HCT116 (cell line): ENCODE measurements at regions of chr14 and their contacts with region 1.

Region 1: DNA sequence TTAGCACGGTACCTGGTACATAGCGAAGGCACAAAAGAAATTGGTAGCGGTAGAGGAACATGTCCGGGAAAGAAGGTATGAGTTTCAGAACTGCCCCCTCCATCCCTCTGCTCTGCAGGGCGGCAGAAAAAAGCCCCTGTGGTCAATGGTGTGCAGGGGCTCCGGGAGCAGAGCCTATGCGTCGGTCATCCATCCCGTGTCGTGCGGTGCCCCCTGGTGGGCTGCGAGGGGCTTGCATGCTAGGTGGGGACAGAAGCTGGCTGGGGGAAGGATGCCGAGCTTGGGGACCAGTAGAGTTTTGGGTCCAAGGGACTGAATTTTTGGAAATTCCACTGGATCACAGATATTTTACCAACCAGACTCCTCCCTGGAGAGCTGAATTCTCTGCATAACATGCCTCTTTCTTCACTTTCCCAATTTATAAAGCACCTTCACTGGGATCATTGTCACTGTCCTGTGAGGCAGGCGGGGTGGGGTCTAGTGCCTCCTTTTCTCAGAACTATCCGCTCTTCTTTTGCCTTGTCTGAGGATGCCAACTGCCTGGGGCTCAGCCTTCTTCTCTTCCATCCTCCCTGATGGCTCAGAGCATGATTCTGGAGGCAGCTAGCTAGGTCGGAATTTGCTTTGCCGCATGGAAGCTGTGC is 148.7 kb downstream of the SMOC1 start:
- DNase-seq: peak; percentile 10
- ATAC-seq: peak; percentile 91
- H3K4me3 ChIP-seq: no peak overlapping the region
- H3K27ac ChIP-seq: no peak overlapping the region
- H3K4me1 ChIP-seq: peaks cover 7 to 8% of the 10 kb centered on the region in 2 experiments; a peak in 3 of 4 replicates
- H3K27me3 ChIP-seq: peaks cover 3% of the 10 kb centered on the region; the same call in 1 of the 2 replicates
- CTCF ChIP-seq: peak; percentile 82 to 96 (median 92)
- POLR2A ChIP-seq: no peak
- RAD21 ChIP-seq: peak; percentile 94

Region 2: DNA sequence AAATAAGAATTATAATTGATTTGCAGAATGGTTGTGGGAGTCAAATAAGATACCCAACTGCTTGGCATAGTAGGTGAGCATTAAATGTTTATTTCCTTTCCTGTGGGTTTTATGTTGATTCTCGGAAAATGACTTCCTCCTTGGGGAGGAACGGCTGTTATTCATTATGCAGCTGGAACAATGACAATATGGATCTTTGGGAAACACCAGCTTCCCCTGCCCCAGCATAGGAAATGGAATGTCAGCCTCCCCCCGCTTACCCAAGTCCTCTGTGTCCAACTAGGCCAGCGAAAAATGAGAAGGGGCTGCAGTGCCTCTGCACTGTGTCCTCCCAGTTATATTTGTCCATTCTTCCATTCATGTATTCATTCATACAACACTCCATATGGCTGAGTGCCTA is 441.5 kb before region 1 on chr14:
- CTCF ChIA-PET with region 1: interaction called, 5 read pairs
- POLR2A ChIA-PET with region 1: no interaction called
- RAD21 ChIA-PET with region 1: no interaction called
- intact Hi-C with region 1: loop called (anchors 5 kb)
- DNase-seq: no peak
- ATAC-seq: no peak
- H3K4me3 ChIP-seq: no peak overlapping the region
- H3K27ac ChIP-seq: no peak overlapping the region
- H3K4me1 ChIP-seq: no peaks in the 10 kb centered on the region
- H3K27me3 ChIP-seq: no peaks in the 10 kb centered on the region
- CTCF ChIP-seq: no peak
- POLR2A ChIP-seq: no peak
- RAD21 ChIP-seq: no peak

Region 3: DNA sequence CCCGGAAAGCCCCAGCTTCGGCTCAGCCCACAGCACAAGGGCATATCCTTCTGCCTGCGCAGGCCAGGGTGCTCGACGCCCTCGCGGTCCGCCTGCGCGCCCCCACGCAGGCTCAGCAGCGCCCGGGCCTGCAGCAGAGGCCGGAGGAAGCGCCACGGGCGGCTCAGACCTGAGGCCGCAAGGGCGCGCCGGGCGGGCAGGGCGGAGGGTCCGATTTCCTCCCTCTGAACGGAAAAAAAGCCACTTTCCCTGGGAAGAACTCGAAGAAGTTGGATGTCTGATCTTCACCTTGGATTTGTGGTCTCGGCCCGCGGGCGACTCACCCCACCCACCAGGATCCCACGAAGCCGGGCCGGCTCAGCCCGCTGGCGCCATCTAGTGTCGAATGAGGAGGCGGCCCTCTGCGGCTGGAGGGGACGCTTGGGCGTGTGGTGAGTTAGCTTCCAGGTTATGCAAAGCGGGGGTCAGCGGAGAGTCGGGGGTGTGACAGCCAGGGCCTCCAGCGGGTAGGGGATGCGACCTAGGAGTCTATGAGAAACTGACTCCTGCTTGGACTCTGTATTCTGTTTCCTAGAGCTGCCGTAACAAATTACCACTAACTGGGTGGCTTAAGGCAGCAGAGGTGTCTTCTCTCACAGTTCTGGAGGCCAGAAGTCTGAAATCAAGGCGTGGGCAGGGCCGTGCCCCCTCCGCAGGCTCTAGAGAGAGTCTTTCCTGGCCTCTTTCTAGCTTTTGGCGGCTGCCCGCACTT is 301.0 kb before region 1 on chr14:
- CTCF ChIA-PET with region 1: interaction called, 16 read pairs
- POLR2A ChIA-PET with region 1: no interaction called
- RAD21 ChIA-PET with region 1: interaction called in 1 of 2 experiments, 4 read pairs
- intact Hi-C with region 1: loop called (anchors 2 kb)
- DNase-seq: no peak
- ATAC-seq: peak; percentile 95
- H3K4me3 ChIP-seq: peak overlapping the region; percentile 17 to 49; a peak in 3 of 4 replicates
- H3K27ac ChIP-seq: peak overlapping the region; percentile 29; the same call in 1 of the 2 replicates
- H3K4me1 ChIP-seq: peaks cover 0 to 8% of the 10 kb centered on the region in 2 experiments; a peak in 3 of 4 replicates
- H3K27me3 ChIP-seq: no peaks in the 10 kb centered on the region
- CTCF ChIP-seq: peak; percentile 94 to 98 (median 97)
- POLR2A ChIP-seq: no peak
- RAD21 ChIP-seq: peak; percentile 99

Region 4: GRCh38 chr14:69818757-69819191 is 209.1 kb before region 1 on chr14:
- CTCF ChIA-PET with region 1: interaction called, 63 read pairs
- POLR2A ChIA-PET with region 1: no interaction called
- RAD21 ChIA-PET with region 1: interaction called, 13 to 22 read pairs
- intact Hi-C with region 1: loop called (anchors 1 kb)
- DNase-seq: peak; percentile 66
- ATAC-seq: peak; percentile 97
- H3K4me3 ChIP-seq: no peak overlapping the region
- H3K27ac ChIP-seq: no peak overlapping the region
- H3K4me1 ChIP-seq: no peaks in the 10 kb centered on the region
- H3K27me3 ChIP-seq: peaks cover 25% of the 10 kb centered on the region
- CTCF ChIP-seq: peak; percentile 71 to 95 (median 88)
- POLR2A ChIP-seq: no peak
- RAD21 ChIP-seq: peak; percentile 93

Region 5: GRCh38 chr14:69879175-69880043 is 148.5 kb before region 1 on chr14 and contains the start of gene SMOC1:
- CTCF ChIA-PET with region 1: interaction called, 24 read pairs
- POLR2A ChIA-PET with region 1: interaction called, 3 read pairs
- RAD21 ChIA-PET with region 1: interaction called, 4 to 6 read pairs
- intact Hi-C with region 1: loop called (anchors 1 kb)
- DNase-seq: no peak
- ATAC-seq: no peak
- H3K4me3 ChIP-seq: no peak within 1 kb of the TSS
- H3K27ac ChIP-seq: no peak within 1 kb of the TSS
- H3K4me1 ChIP-seq: no peaks in the 10 kb centered on the region
- H3K27me3 ChIP-seq: peaks cover 27% of the 10 kb centered on the region
- CTCF ChIP-seq: no peak
- POLR2A ChIP-seq: no peak
- RAD21 ChIP-seq: no peak
- total RNA-seq, gene SMOC1: not detected

Region 6: GRCh38 chr14:70073924-70074566 is 46.1 kb after region 1 on chr14:
- CTCF ChIA-PET with region 1: interaction called, 18 read pairs
- POLR2A ChIA-PET with region 1: no interaction called
- RAD21 ChIA-PET with region 1: interaction called in 1 of 2 experiments, 3 read pairs
- intact Hi-C with region 1: no loop called
- DNase-seq: peak; percentile 64
- ATAC-seq: peak; percentile 99
- H3K4me3 ChIP-seq: no peak overlapping the region
- H3K27ac ChIP-seq: no peak overlapping the region
- H3K4me1 ChIP-seq: no peaks in the 10 kb centered on the region
- H3K27me3 ChIP-seq: peaks cover 35% of the 10 kb centered on the region
- CTCF ChIP-seq: peak; percentile 79 to 98 (median 96)
- POLR2A ChIP-seq: no peak
- RAD21 ChIP-seq: peak; percentile 76